Left ventricle myocardium inferior (tissue), 1 donor: ENCODE measurements at regions of chr9 and their contacts with region 1.

Region 1: DNA sequence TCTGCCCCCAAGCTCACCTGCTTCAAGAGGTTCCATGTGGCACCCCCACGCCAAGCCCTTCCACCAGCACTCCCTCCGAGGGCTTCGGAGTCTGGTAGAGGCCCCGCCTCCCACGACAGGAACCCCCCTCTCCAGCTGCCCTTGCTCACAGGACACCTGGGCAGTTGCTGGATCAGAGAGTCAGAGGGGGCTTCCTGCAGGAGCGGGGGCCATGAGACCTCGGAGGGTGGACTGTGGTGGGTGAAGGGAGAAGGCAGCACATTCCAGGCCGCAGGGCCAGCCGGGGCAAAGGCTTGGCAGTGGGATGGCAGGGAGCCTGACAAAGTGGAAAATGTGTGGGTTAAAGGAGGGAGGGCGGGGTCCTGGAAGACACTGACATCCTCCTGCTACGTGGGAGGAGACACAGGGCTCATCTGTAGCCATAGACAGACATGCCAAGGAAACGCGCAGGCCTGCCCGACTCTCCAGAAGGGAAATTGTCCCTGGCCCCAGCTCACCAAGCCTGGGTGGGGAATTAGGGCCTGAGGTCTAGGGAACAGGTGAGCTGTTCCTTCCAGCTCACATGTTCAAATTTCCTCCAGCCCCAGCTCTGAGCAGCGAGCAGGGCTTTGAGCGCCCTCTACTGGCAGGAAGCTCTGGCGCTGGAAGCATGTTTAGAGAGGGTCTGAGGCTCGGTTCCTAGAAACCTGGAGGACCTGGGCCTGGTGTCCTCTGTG is 74.2 kb downstream of the NTNG2 start:
- DNase-seq: peak; percentile 75
- H3K4me3 ChIP-seq: no peak overlapping the region
- H3K27ac ChIP-seq: no peak overlapping the region
- H3K4me1 ChIP-seq: peaks cover 29% of the 10 kb centered on the region
- H3K27me3 ChIP-seq: peaks cover 19% of the 10 kb centered on the region
- CTCF ChIP-seq: peak; percentile 98

Region 2: GRCh38 chr9:131773911-131774379 is 462.2 kb before region 1 on chr9:
- intact Hi-C with region 1: loop called (anchors 10 kb)
- DNase-seq: no peak
- H3K4me3 ChIP-seq: no peak overlapping the region
- H3K27ac ChIP-seq: no peak overlapping the region
- H3K4me1 ChIP-seq: no peaks in the 10 kb centered on the region
- H3K27me3 ChIP-seq: peaks cover 44% of the 10 kb centered on the region
- CTCF ChIP-seq: no peak

Region 3: DNA sequence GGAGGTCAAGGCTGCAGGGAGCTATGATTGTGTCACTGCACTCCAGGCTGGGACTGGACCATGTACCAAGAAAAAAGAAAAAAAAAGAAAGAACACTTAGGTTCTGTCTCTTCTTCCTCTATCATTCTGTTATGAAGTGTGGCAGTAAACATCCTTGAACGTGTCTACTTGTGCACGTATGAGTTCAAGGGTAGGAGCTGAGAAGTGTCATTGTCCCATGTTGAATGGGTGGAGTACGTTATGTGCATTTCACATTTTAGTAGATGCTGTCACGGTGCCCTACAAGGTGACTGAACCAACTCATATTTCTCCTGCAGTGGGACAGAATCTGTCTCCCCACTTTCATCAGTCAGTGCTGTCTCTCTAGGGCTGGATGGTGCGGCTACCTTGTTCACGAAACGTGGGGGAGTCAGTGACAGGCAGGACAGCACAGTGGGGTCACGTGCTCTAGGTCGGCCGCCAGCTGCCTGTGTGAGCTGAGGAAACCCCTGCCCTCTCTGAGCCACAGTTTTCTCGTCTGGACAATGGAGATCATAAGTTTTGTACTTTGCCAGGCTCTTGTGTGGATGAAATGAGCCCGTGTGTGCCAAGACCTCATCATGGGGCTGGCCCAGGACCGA is 481.3 kb after region 1 on chr9:
- intact Hi-C with region 1: no loop called
- DNase-seq: no peak
- H3K4me3 ChIP-seq: no peak overlapping the region
- H3K27ac ChIP-seq: no peak overlapping the region
- H3K4me1 ChIP-seq: no peaks in the 10 kb centered on the region
- H3K27me3 ChIP-seq: peaks cover 51% of the 10 kb centered on the region
- CTCF ChIP-seq: no peak

Region 4: GRCh38 chr9:132849185-132849706 is 613.1 kb after region 1 on chr9:
- intact Hi-C with region 1: no loop called
- DNase-seq: peak; percentile 28
- H3K4me3 ChIP-seq: no peak overlapping the region
- H3K27ac ChIP-seq: peak overlapping the region; percentile 42
- H3K4me1 ChIP-seq: peaks cover 8% of the 10 kb centered on the region
- H3K27me3 ChIP-seq: no peaks in the 10 kb centered on the region
- CTCF ChIP-seq: no peak